Activated naive CD4-positive, alpha-beta T cell treated with anti-CD3 and anti-CD28 coated beads for 36 hours (primary cell): ENCODE measurements at regions of chr4 and their contacts with region 1.

Region 1: DNA sequence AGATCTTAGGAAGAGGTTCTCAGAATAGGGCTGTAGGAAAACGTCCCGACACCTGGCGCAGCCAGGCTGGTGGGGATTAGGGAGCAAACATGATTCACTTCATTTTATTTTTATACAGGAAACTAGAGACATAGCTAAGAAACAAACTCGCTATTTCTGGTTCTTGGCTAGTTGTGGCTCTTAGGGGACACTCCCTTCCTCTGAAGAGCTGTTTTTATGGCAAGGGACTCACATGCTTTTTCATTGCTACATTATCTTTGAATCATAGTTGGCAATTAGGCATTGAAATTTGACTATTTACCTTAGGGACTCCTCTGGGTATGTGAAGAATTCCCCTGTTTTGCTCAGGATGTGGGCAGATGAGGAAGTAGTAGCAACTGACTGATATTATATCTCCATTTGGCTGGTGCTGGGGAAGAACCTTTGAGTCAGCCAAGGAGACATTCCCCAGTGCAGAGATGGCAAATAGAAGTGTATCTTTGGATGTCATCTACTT is 174.5 kb downstream of the SMIM20 start:
- DNase-seq: peak; percentile 75
- H3K4me3 Mint-ChIP-seq: peak overlapping the region; percentile 19
- H3K27ac Mint-ChIP-seq: peak overlapping the region; percentile 93
- H3K4me1 Mint-ChIP-seq: peaks cover 47% of the 10 kb centered on the region
- H3K27me3 Mint-ChIP-seq: peaks cover 6% of the 10 kb centered on the region

Region 2: GRCh38 chr4:24862073-24862751 is 1226.3 kb before region 1 on chr4:
- CTCF ChIA-PET with region 1: no interaction called
- intact Hi-C with region 1: no loop called
- DNase-seq: no peak
- H3K4me3 Mint-ChIP-seq: no peak overlapping the region
- H3K27ac Mint-ChIP-seq: no peak overlapping the region
- H3K4me1 Mint-ChIP-seq: no peaks in the 10 kb centered on the region
- H3K27me3 Mint-ChIP-seq: no peaks in the 10 kb centered on the region

Region 3: GRCh38 chr4:26179316-26179760 is 90.9 kb after region 1 on chr4:
- CTCF ChIA-PET with region 1: interaction called, 3 read pairs
- intact Hi-C with region 1: loop called (anchors 1 kb)
- DNase-seq: peak; percentile 33
- H3K4me3 Mint-ChIP-seq: no peak overlapping the region
- H3K27ac Mint-ChIP-seq: peak overlapping the region; percentile 60
- H3K4me1 Mint-ChIP-seq: peaks cover 16% of the 10 kb centered on the region
- H3K27me3 Mint-ChIP-seq: no peaks in the 10 kb centered on the region

Region 4: GRCh38 chr4:26307037-26307800 is 218.7 kb after region 1 on chr4:
- CTCF ChIA-PET with region 1: no interaction called
- intact Hi-C with region 1: loop called (anchors 1 kb)
- DNase-seq: no peak
- H3K4me3 Mint-ChIP-seq: no peak overlapping the region
- H3K27ac Mint-ChIP-seq: peak overlapping the region; percentile 47
- H3K4me1 Mint-ChIP-seq: peaks cover 11% of the 10 kb centered on the region
- H3K27me3 Mint-ChIP-seq: no peaks in the 10 kb centered on the region

Region 5: DNA sequence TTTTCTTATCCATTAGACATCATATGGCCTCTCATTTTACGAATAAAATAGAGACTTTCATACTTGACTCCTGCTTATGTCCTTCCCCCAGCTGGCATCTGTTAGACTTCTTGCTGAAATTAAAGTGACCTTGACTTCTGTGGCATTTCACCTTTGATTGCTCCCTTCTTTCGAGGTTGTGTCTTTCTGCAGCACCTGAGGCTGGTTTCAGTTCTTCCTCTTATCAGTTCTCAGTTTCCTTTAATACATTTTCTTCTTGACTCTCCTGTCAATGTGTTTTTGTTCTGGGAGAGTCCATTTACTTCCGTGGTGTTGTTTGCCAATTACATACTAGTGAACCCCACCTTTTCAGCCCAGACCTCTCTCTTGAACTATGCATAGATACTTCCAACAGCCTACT is 314.0 kb after region 1 on chr4:
- CTCF ChIA-PET with region 1: no interaction called
- intact Hi-C with region 1: no loop called
- DNase-seq: no peak
- H3K4me3 Mint-ChIP-seq: no peak overlapping the region
- H3K27ac Mint-ChIP-seq: no peak overlapping the region
- H3K4me1 Mint-ChIP-seq: peaks cover 14% of the 10 kb centered on the region
- H3K27me3 Mint-ChIP-seq: no peaks in the 10 kb centered on the region